GM12878 (cell line): ENCODE measurements at regions of chr9 and their contacts with region 1.

Region 1: GRCh38 chr9:72734631-72735030 is 213.2 kb downstream of the TMC1 start:
- DNase-seq: no peak
- ATAC-seq: no peak
- H3K4me3 ChIP-seq: no peak overlapping the region
- H3K27ac ChIP-seq: no peak overlapping the region
- H3K4me1 ChIP-seq: no peaks in the 10 kb centered on the region
- H3K27me3 ChIP-seq: no peaks in the 10 kb centered on the region
- CTCF ChIP-seq: no peak
- EP300 ChIP-seq: no peak
- POLR2A ChIP-seq: no peak
- RAD21 ChIP-seq: no peak

Region 2: GRCh38 chr9:72675586-72675985 is 59.0 kb before region 1 on chr9:
- CTCF ChIA-PET with region 1: no interaction called
- POLR2A ChIA-PET with region 1: no interaction called
- RAD21 ChIA-PET with region 1: no interaction called
- SMC1A ChIA-PET with region 1: no interaction called
- in situ Hi-C with region 1: no loop called
- intact Hi-C with region 1: loop called (anchors 10 kb)
- DNase-seq: no peak
- ATAC-seq: no peak
- H3K4me3 ChIP-seq: no peak overlapping the region
- H3K27ac ChIP-seq: no peak overlapping the region
- H3K4me1 ChIP-seq: no peaks in the 10 kb centered on the region
- H3K27me3 ChIP-seq: no peaks in the 10 kb centered on the region
- CTCF ChIP-seq: no peak
- EP300 ChIP-seq: no peak
- POLR2A ChIP-seq: no peak
- RAD21 ChIP-seq: no peak

Region 3: GRCh38 chr9:72695365-72695764 is 39.3 kb before region 1 on chr9:
- CTCF ChIA-PET with region 1: no interaction called
- POLR2A ChIA-PET with region 1: no interaction called
- RAD21 ChIA-PET with region 1: no interaction called
- SMC1A ChIA-PET with region 1: no interaction called
- in situ Hi-C with region 1: no loop called
- intact Hi-C with region 1: loop called (anchors 5 kb)
- DNase-seq: no peak
- ATAC-seq: no peak
- H3K4me3 ChIP-seq: no peak overlapping the region
- H3K27ac ChIP-seq: no peak overlapping the region
- H3K4me1 ChIP-seq: no peaks in the 10 kb centered on the region
- H3K27me3 ChIP-seq: no peaks in the 10 kb centered on the region
- CTCF ChIP-seq: no peak
- EP300 ChIP-seq: no peak
- POLR2A ChIP-seq: no peak
- RAD21 ChIP-seq: no peak